ENCODE measurements at regions of chr2 and their contacts with region 1.

Region 1: DNA sequence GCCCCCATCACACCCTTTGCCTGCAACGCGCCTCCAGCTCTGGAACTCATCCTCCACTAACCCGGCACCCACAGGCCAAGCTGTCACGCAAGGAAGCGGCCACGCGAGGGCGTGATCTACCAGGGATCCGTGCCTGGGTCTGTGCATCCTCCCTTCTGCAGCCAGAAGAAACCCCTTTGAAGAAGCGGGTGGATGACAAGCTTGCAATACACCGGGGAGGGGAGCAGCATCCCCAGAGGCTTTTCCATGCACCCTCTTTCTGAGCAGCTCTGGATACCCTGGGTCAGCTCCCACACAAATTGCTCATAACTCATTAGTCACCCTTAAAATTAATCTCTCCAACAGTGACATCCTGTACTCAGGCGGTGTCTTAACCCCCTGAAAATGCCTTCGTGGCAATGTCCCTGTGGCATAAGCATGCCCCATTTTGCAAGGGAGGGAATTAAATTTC is 47.6 kb downstream of the PDCL3 start:
- DNase-seq: no peak

Region 2: GRCh38 chr2:100494712-100495111 is 115.7 kb before region 1 on chr2:
- intact Hi-C with region 1: no loop called
- DNase-seq: no peak

Region 3: DNA sequence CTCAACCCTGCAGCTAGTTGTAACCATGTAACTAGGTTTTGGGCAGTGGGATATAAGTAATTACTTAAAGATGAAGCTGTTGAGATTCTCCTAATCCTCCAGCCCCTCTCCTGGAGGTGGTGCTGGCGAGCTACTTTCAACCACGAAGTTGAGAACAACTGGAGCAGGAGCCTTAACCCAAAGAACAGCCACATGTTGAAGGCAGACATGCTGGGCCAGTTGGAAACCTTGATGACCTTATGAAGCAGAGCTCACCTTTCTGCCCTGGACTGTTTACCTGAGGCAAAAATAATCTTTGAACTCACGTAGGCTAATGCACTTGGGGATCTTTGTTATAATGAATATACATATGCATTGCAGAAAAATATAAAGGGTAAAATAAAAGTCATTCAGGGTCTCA is 119.9 kb after region 1 on chr2:
- intact Hi-C with region 1: loop called (anchors 5 kb)
- DNase-seq: no peak

Region 4: DNA sequence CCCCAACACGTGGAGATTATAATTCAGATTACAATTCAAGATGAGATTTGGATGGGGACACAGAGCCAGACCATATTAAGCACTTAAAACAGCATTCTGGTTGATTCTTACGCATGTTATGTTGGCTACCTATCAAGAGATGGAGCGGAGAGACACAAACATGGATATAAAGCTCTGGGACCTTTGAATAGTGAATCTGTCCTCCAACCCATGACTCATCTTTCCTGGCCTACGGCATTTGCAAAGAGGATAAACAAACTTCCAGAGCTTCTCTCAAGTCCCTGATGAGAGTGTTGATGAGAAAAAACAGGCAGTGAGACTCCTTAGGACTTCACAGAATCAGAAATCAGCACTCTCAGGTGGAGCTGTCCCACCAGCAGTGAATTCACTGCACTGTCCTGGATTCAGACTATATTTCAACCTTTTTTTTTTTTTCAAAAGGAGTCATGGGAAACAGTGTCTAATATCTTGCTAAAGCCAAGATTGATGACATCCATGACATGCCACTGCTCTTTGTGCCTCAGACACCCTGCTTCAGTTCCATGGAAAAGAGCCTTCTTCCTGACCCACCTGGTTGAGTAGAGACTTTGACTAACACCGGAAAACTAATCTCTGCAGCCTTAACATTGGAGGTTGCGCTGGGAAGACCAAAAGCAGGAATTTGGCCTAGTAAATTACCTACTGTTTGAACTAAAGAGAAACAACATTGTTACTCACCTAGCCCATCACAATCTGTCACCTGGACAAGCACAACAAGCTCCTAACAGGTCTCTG is 147.4 kb after region 1 on chr2:
- intact Hi-C with region 1: no loop called
- DNase-seq: no peak

Region 5: GRCh38 chr2:100984892-100985379 is 374.5 kb after region 1 on chr2:
- intact Hi-C with region 1: loop called (anchors 1 kb)
- DNase-seq: peak; percentile 86

Region 6: GRCh38 chr2:101205521-101205998 is 595.2 kb after region 1 on chr2:
- intact Hi-C with region 1: loop called (anchors 5 kb)
- DNase-seq: no peak